Activated T-helper 2 cell treated with anti-CD3 and anti-CD28 coated beads, Interferon-gamma antibody, Interleukin-2, Interleukin-4, amounts not matched to agents 10 μg/mL and 5 μg/mL and 100 μg/mL, durations not matched to agents 14 hours and 24 hours and 36 hours (primary cell): ENCODE measurements at regions of chr10 and their contacts with region 1.

Region 1: DNA sequence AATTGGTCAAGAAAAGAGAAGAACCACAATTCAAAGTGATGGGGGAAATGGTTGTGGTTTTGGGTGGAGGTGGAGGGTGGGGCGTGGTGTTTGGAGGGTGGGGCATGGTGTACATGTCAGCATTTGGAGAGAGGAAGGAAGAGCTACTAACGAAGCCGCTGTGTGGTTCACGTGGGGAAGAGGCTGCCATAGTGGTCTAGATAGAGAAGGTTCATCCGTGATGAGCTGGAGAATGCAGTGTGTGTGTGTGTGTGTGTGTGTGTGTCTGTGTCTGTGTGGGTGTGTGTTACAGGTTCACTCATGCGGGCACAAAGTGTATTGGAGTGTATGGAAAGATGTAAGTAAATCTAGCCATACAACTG is 6.1 kb upstream of the VCL start:
- DNase-seq: peak; percentile 81
- H3K4me3 Mint-ChIP-seq: no peak overlapping the region
- H3K27ac Mint-ChIP-seq: peak overlapping the region; percentile 65
- H3K4me1 Mint-ChIP-seq: peaks cover 41% of the 10 kb centered on the region
- H3K27me3 Mint-ChIP-seq: no peaks in the 10 kb centered on the region

Region 2: GRCh38 chr10:73931767-73932619 is 59.9 kb before region 1 on chr10:
- intact Hi-C with region 1: no loop called
- DNase-seq: peak; percentile 32
- H3K4me3 Mint-ChIP-seq: no peak overlapping the region
- H3K27ac Mint-ChIP-seq: peak overlapping the region; percentile 59
- H3K4me1 Mint-ChIP-seq: peaks cover 16% of the 10 kb centered on the region
- H3K27me3 Mint-ChIP-seq: peaks cover 3% of the 10 kb centered on the region

Region 3: DNA sequence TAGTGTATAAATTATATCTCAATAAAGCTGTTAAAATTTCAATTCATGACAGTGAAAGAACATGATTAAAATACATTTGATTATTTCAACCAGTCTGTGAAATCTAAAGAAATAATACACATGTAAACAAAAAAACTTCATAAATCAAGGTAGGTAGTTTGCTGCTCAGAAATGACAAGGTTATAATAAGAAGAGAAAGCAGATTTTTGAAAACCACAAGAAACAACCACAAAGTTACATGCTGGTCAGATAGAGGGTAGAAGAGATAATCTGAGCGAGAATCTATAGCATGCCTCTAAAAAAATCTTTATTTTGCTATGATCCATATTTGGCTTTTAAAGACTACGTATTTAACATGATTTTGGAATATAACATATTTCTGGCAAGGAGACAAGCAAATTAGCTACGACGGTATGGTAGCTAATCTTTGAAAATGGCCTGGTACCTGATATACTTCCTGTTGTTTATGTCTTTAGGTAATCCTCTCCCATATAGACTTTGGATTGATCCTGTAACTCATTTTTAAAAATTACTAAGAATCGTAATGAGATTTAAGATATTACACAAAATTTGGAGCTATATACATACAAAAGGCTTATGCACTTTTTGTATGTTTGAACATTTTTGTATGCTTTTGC is 17.4 kb before region 1 on chr10:
- intact Hi-C with region 1: loop called (anchors 2 kb)
- DNase-seq: no peak
- H3K4me3 Mint-ChIP-seq: no peak overlapping the region
- H3K27ac Mint-ChIP-seq: no peak overlapping the region
- H3K4me1 Mint-ChIP-seq: peaks cover 17% of the 10 kb centered on the region
- H3K27me3 Mint-ChIP-seq: peaks cover 29% of the 10 kb centered on the region

Region 4: GRCh38 chr10:74081192-74081803 is 89.4 kb after region 1 on chr10:
- intact Hi-C with region 1: loop called (anchors 2 kb)
- DNase-seq: no peak
- H3K4me3 Mint-ChIP-seq: no peak overlapping the region
- H3K27ac Mint-ChIP-seq: no peak overlapping the region
- H3K4me1 Mint-ChIP-seq: peaks cover 48% of the 10 kb centered on the region
- H3K27me3 Mint-ChIP-seq: no peaks in the 10 kb centered on the region